AG04449 (cell line): ENCODE measurements at regions of chr17 and their contacts with region 1.

Region 1: DNA sequence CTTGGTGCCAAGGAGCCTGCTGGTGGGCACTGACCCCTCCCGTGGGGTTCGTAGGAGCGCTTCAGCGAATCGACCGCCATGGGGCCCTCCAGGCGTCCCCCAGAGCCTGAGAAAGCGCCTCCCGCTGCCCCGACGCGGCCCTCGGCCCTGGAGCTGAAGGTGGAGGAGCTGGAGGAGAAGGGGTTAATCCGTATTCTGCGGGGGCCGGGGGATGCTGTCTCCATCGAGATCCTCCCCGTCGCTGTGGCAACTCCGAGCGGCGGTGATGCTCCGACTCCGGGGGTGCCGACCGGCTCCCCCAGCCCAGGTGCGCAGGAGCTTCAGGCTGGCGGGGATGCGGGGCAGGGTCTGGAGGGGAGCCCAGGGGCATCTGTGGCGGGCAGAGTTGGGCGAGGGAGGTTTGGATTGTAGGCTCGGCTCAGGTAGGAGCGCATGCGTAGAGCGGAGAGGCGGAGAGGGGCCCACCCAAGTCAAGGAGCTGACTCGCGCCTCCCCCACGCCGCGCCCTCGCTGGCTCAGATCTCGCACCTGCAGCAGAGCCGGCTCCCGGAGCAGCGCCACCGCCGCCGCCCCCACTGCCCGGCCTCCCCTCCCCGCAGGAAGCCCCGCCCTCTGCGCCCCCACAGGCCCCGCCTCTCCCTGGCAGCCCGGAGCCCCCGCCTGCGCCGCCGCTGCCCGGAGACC is 19.8 kb downstream of the FMNL1 start:
- DNase-seq: no peak
- H3K4me3 ChIP-seq: peak overlapping the region; percentile 6; the same call in 1 of the 2 replicates
- CTCF ChIP-seq: no peak

Region 2: GRCh38 chr17:44911133-44912001 is 330.1 kb before region 1 on chr17:
- CTCF ChIA-PET with region 1: no interaction called
- POLR2A ChIA-PET with region 1: no interaction called
- DNase-seq: no peak
- H3K4me3 ChIP-seq: no peak overlapping the region
- CTCF ChIP-seq: peak; percentile 62

Region 3: DNA sequence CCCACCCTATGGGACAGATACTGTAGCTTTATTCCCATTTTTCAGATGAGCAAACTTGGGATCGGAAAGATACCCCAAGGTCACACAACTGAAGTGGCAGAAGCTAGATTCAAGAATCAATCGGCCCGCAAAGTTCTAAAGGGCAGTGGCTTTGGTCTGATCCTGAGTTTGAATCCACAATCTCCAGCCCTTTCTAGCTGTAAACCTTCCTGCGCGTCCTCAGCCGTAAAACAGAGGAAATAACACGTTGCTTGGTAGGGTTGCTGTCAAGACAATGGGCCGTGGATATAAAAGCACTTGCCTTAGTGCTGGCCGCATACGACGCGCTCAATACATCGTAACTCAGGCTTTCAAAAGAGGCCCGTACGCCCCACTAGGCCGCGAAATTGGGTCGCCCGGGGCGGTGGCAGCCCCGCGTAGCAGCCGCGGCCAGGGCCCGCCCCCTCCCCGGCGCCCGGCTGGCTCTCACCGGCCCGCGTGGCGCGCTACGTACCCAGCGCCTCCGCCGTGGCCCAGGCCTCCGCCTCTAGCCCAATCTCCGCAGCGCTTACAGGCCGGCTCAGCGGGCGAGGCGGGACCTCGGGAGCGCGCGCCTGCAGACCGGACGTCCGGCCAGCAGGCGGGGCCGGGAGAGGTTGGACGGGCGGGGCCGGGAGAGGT is 190.3 kb before region 1 on chr17 and contains the start of gene DCAKD:
- CTCF ChIA-PET with region 1: no interaction called
- POLR2A ChIA-PET with region 1: no interaction called
- DNase-seq: peak; percentile 65
- H3K4me3 ChIP-seq: peak within 1 kb of the TSS; percentile 66
- CTCF ChIP-seq: peak; percentile 11

Region 4: GRCh38 chr17:45190503-45191255 is 50.8 kb before region 1 on chr17:
- CTCF ChIA-PET with region 1: no interaction called
- POLR2A ChIA-PET with region 1: no interaction called
- DNase-seq: no peak
- H3K4me3 ChIP-seq: no peak overlapping the region
- CTCF ChIP-seq: no peak

Region 5: DNA sequence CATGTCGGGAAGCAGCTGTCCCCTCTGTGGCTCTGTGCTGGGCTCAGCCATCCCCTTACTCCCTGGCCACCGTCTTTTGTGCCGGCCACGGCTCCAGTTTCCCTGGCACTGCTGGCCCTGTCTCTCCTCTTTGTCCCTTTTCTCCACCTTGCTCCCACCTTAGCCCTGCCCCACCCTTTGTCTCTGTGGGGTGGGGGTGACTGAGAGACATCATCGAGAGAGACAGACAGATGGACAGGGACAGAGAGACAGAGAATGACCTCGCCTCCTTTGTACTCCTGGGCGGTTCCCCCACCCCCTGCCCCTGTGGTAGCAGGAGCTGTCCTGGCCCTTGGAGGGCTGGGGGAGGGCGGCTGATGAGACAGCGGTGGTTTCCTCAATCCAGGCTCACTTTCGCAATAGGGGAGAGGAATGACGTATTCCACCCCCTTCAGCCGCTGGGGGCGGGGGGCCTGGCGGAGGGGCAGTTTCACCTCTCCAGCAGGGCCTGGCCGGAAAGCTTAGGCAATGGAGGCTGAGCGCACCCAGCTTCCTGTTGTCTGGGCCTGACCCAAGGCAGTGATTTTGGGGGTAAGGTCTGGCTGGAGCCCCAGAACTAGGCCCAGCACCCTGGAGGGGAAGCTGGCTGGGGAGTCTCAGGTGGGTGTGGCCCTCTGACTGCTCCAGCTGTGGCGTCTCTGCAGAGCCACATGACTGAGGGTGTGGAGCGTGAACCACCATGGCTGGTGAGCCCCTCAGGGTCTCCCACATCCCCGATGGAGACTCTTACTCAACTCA is 12.5 kb before region 1 on chr17:
- CTCF ChIA-PET with region 1: interaction called, 73 read pairs
- POLR2A ChIA-PET with region 1: no interaction called
- DNase-seq: peak; percentile 54
- H3K4me3 ChIP-seq: no peak overlapping the region
- CTCF ChIP-seq: no peak